GM12878 (cell line): ENCODE measurements at regions of chr3 and their contacts with region 1.

Region 1: GRCh38 chr3:187738331-187739093 is 6.8 kb downstream of the BCL6 start:
- DNase-seq: no peak
- ATAC-seq: peak; percentile 76
- H3K4me3 ChIP-seq: peak overlapping the region; percentile 50; the same call in 1 of the 2 replicates
- H3K27ac ChIP-seq: no peak overlapping the region
- H3K4me1 ChIP-seq: no peaks in the 10 kb centered on the region; the same call in 1 of the 2 replicates
- H3K27me3 ChIP-seq: peaks cover 12 to 19% of the 10 kb centered on the region in 2 experiments
- CTCF ChIP-seq: peak; percentile 77 to 84 (median 84)
- EP300 ChIP-seq: no peak
- POLR2A ChIP-seq: no peak
- RAD21 ChIP-seq: peak; percentile 88

Region 2: GRCh38 chr3:187361835-187362234 is 376.7 kb before region 1 on chr3:
- CTCF ChIA-PET with region 1: no interaction called
- POLR2A ChIA-PET with region 1: no interaction called
- RAD21 ChIA-PET with region 1: no interaction called
- SMC1A ChIA-PET with region 1: no interaction called
- in situ Hi-C with region 1: no loop called
- intact Hi-C with region 1: no loop called
- DNase-seq: no peak
- ATAC-seq: peak; percentile 24; the same call in 1 of the 3 replicates
- H3K4me3 ChIP-seq: no peak overlapping the region
- H3K27ac ChIP-seq: no peak overlapping the region
- H3K4me1 ChIP-seq: peaks cover 4% of the 10 kb centered on the region; the same call in 1 of the 2 replicates
- H3K27me3 ChIP-seq: no peaks in the 10 kb centered on the region
- CTCF ChIP-seq: no peak
- EP300 ChIP-seq: no peak
- POLR2A ChIP-seq: no peak
- RAD21 ChIP-seq: no peak

Region 3: DNA sequence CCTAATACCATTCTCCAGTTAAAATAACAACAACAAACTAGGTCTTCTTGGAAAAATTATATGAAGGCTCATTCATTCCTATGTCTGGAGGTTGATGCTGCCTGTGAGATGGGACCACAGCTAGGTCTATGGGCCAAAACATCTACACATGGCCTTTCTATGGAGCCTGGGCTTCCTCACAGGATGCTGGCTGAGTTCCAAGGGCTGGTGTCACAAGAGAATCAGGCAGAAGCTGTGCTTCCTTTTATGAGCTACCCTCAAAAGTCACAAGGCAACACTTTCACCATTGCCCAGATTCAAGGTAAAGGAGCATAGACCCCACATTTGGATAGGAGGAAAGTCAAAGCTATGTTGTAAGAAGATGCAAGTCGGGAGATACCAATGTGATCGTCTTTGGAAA is 31.5 kb before region 1 on chr3:
- CTCF ChIA-PET with region 1: interaction called, 12 read pairs
- POLR2A ChIA-PET with region 1: no interaction called
- RAD21 ChIA-PET with region 1: no interaction called
- SMC1A ChIA-PET with region 1: no interaction called
- in situ Hi-C with region 1: no loop called
- intact Hi-C with region 1: no loop called
- DNase-seq: no peak
- ATAC-seq: no peak
- H3K4me3 ChIP-seq: no peak overlapping the region
- H3K27ac ChIP-seq: no peak overlapping the region
- H3K4me1 ChIP-seq: no peaks in the 10 kb centered on the region
- H3K27me3 ChIP-seq: peaks cover 0 to 2% of the 10 kb centered on the region in 2 experiments; a peak in 1 of 4 replicates
- CTCF ChIP-seq: no peak
- EP300 ChIP-seq: no peak
- POLR2A ChIP-seq: no peak
- RAD21 ChIP-seq: no peak

Region 4: GRCh38 chr3:187955076-187955952 is 216.8 kb after region 1 on chr3:
- CTCF ChIA-PET with region 1: no interaction called
- POLR2A ChIA-PET with region 1: no interaction called
- RAD21 ChIA-PET with region 1: no interaction called
- SMC1A ChIA-PET with region 1: no interaction called
- in situ Hi-C with region 1: no loop called
- intact Hi-C with region 1: no loop called
- DNase-seq: no peak
- ATAC-seq: no peak
- H3K4me3 ChIP-seq: no peak overlapping the region
- H3K27ac ChIP-seq: no peak overlapping the region
- H3K4me1 ChIP-seq: peaks cover 6% of the 10 kb centered on the region
- H3K27me3 ChIP-seq: peaks cover 0 to 3% of the 10 kb centered on the region in 2 experiments; a peak in 3 of 4 replicates
- CTCF ChIP-seq: no peak
- EP300 ChIP-seq: no peak
- POLR2A ChIP-seq: no peak
- RAD21 ChIP-seq: no peak

Region 5: GRCh38 chr3:188061133-188061532 is 322.6 kb after region 1 on chr3:
- CTCF ChIA-PET with region 1: interaction called, 11 read pairs
- POLR2A ChIA-PET with region 1: no interaction called
- RAD21 ChIA-PET with region 1: no interaction called
- SMC1A ChIA-PET with region 1: interaction called, 3 read pairs
- in situ Hi-C with region 1: no loop called
- intact Hi-C with region 1: loop called (anchors 5 kb)
- DNase-seq: no peak
- ATAC-seq: peak; percentile 54; the same call in 2 of the 3 replicates
- H3K4me3 ChIP-seq: no peak overlapping the region
- H3K27ac ChIP-seq: no peak overlapping the region
- H3K4me1 ChIP-seq: no peaks in the 10 kb centered on the region
- H3K27me3 ChIP-seq: peaks cover 0 to 3% of the 10 kb centered on the region in 2 experiments; a peak in 1 of 4 replicates
- CTCF ChIP-seq: no peak
- EP300 ChIP-seq: no peak
- POLR2A ChIP-seq: no peak
- RAD21 ChIP-seq: 0 out of 2 replicates have a peak, but pooled peaks have one; percentile 7

Region 6: GRCh38 chr3:188205992-188206416 is 467.5 kb after region 1 on chr3:
- CTCF ChIA-PET with region 1: interaction called, 4 read pairs
- POLR2A ChIA-PET with region 1: no interaction called
- RAD21 ChIA-PET with region 1: no interaction called
- SMC1A ChIA-PET with region 1: interaction called, 3 read pairs
- in situ Hi-C with region 1: no loop called
- intact Hi-C with region 1: loop called (anchors 5 kb)
- DNase-seq: no peak
- ATAC-seq: peak; percentile 40; the same call in 1 of the 3 replicates
- H3K4me3 ChIP-seq: no peak overlapping the region
- H3K27ac ChIP-seq: no peak overlapping the region
- H3K4me1 ChIP-seq: no peaks in the 10 kb centered on the region
- H3K27me3 ChIP-seq: 0 out of 4 replicates have a peak, but pooled peaks cover 0 to 3% of the 10 kb centered on the region in 2 experiments
- CTCF ChIP-seq: peak in 2 of 3 experiments; percentile 25 to 26; a peak in 2 of 6 replicates
- EP300 ChIP-seq: no peak
- POLR2A ChIP-seq: no peak
- RAD21 ChIP-seq: 0 out of 2 replicates have a peak, but pooled peaks have one; percentile 13

Region 7: GRCh38 chr3:188439080-188439479 is 700.6 kb after region 1 on chr3:
- CTCF ChIA-PET with region 1: interaction called, 4 read pairs
- POLR2A ChIA-PET with region 1: no interaction called
- RAD21 ChIA-PET with region 1: no interaction called
- SMC1A ChIA-PET with region 1: no interaction called
- in situ Hi-C with region 1: no loop called
- intact Hi-C with region 1: loop called (anchors 5 kb)
- DNase-seq: no peak
- ATAC-seq: peak; percentile 87
- H3K4me3 ChIP-seq: peak overlapping the region; percentile 32
- H3K27ac ChIP-seq: no peak overlapping the region
- H3K4me1 ChIP-seq: no peaks in the 10 kb centered on the region
- H3K27me3 ChIP-seq: peaks cover 0 to 2% of the 10 kb centered on the region in 2 experiments; a peak in 1 of 4 replicates
- CTCF ChIP-seq: no peak
- EP300 ChIP-seq: peak in 1 of 2 experiments; percentile 16; a peak in 1 of 4 replicates
- POLR2A ChIP-seq: no peak
- RAD21 ChIP-seq: no peak

Region 8: GRCh38 chr3:188749010-188749617 is 1010.6 kb after region 1 on chr3:
- CTCF ChIA-PET with region 1: interaction called, 105 read pairs
- POLR2A ChIA-PET with region 1: no interaction called
- RAD21 ChIA-PET with region 1: interaction called, 29 read pairs
- SMC1A ChIA-PET with region 1: interaction called, 28 read pairs
- in situ Hi-C with region 1: loop called (anchors 5 kb)
- intact Hi-C with region 1: loop called (anchors 2 kb)
- DNase-seq: no peak
- ATAC-seq: peak; percentile 77
- H3K4me3 ChIP-seq: no peak overlapping the region
- H3K27ac ChIP-seq: no peak overlapping the region
- H3K4me1 ChIP-seq: peaks cover 12% of the 10 kb centered on the region
- H3K27me3 ChIP-seq: peaks cover 0 to 6% of the 10 kb centered on the region in 2 experiments; a peak in 1 of 4 replicates
- CTCF ChIP-seq: peak; percentile 70 to 89 (median 88)
- EP300 ChIP-seq: no peak
- POLR2A ChIP-seq: no peak
- RAD21 ChIP-seq: peak; percentile 69

Region 9: DNA sequence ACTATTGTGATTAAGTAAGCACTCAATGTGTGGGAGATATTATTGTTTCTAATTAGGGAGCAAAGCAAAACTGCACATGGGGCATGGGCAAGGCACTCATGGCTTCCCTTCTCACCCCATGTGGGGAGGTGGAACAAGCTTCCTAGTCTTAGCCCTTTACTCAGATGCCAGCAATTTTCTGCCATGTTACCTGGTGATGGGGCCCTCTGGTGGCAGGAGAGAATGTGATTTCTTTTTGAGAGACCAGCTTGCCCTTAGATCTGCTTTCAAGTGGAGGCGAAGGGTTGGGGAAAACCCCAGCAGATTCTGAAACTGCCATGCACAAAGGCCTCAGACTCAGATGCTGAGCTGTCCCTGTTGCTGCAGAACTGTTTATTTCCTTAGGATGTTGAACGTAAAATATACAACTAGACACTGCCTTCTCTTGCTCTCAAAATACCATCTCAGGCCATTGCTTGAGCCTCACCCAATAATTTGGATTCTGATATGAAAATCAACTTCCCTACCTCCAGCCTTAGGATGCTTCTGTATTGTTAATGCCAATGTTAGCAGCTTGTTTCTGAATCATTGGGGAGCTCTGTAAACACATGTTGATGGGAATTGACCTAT is 1303.1 kb after region 1 on chr3:
- CTCF ChIA-PET with region 1: interaction called, 81 read pairs
- POLR2A ChIA-PET with region 1: no interaction called
- RAD21 ChIA-PET with region 1: interaction called, 41 read pairs
- SMC1A ChIA-PET with region 1: interaction called, 25 read pairs
- in situ Hi-C with region 1: loop called (anchors 5 kb)
- intact Hi-C with region 1: loop called (anchors 2 kb)
- DNase-seq: peak; percentile 19
- ATAC-seq: peak; percentile 100
- H3K4me3 ChIP-seq: no peak overlapping the region
- H3K27ac ChIP-seq: no peak overlapping the region
- H3K4me1 ChIP-seq: no peaks in the 10 kb centered on the region
- H3K27me3 ChIP-seq: no peaks in the 10 kb centered on the region; a peak in 1 of 4 replicates
- CTCF ChIP-seq: peak; percentile 50 to 68 (median 64)
- EP300 ChIP-seq: no peak
- POLR2A ChIP-seq: no peak
- RAD21 ChIP-seq: peak; percentile 54